CD8-positive, alpha-beta T cell (primary cell): ENCODE measurements at regions of chr4 and their contacts with region 1.

Region 1: DNA sequence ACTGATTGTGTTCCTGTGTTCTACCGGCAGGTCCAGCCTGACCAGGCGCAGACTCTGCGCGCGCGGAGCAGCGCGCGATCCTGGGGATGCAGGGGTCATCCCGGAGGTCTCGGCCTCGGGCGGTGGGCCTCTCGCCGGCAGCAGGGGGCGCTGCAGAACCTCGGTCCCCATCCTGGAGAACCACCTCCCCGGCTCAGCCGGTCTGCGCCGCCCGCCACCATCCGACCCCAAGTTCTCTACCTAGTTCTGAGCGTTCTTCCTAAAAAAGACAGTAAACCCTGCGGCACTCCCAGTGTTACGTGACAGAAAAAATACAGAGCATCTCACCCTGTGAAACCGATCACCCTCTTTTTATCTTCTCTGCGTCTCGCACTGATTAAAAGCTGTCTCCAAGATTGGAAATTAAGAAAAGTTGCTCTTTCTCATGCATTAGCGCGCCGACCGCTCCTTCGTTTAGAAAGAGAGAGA is 1.6 kb downstream of the TRPC3 start:
- DNase-seq: peak; percentile 74 to 91 (median 85)
- ATAC-seq: peak; percentile 84
- H3K4me3 ChIP-seq: peak overlapping the region; percentile 65 to 71
- H3K4me3 Mint-ChIP-seq: peak overlapping the region; percentile 88
- H3K27ac ChIP-seq: peak overlapping the region in 1 of 2 experiments; percentile 34
- H3K27ac Mint-ChIP-seq: no peak overlapping the region
- H3K4me1 ChIP-seq: peaks cover 3% of the 10 kb centered on the region
- H3K4me1 Mint-ChIP-seq: peaks cover 8% of the 10 kb centered on the region
- H3K27me3 ChIP-seq: peaks cover 7 to 8% of the 10 kb centered on the region in 2 experiments
- H3K27me3 Mint-ChIP-seq: peaks cover 51% of the 10 kb centered on the region
- CTCF ChIP-seq: peak; percentile 86

Region 2: DNA sequence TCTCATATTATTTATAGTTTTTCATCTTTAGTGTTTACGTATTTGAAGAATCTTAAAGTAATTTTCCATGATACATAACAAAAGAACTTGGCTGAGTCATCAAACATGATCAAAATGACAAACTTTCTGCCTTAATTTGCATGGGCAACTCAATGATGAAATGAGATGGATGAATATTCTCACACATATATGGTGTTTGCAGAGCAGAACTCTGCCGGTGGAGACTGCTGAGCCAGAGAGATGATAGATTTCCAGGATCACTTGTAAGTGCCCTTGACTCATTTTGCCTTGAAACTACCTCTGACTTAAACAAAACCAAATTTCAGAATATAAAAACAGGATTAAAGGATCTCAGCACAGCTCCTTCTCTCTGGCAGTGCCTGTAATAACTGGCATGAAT is 36.6 kb before region 1 on chr4:
- CTCF ChIA-PET with region 1: no interaction called
- POLR2A ChIA-PET with region 1: no interaction called
- intact Hi-C with region 1: no loop called
- DNase-seq: no peak
- ATAC-seq: no peak
- H3K4me3 ChIP-seq: no peak overlapping the region
- H3K4me3 Mint-ChIP-seq: no peak overlapping the region
- H3K27ac ChIP-seq: no peak overlapping the region
- H3K27ac Mint-ChIP-seq: no peak overlapping the region
- H3K4me1 ChIP-seq: no peaks in the 10 kb centered on the region
- H3K4me1 Mint-ChIP-seq: peaks cover 5% of the 10 kb centered on the region
- H3K27me3 ChIP-seq: no peaks in the 10 kb centered on the region
- H3K27me3 Mint-ChIP-seq: peaks cover 4% of the 10 kb centered on the region
- CTCF ChIP-seq: no peak

Region 3: DNA sequence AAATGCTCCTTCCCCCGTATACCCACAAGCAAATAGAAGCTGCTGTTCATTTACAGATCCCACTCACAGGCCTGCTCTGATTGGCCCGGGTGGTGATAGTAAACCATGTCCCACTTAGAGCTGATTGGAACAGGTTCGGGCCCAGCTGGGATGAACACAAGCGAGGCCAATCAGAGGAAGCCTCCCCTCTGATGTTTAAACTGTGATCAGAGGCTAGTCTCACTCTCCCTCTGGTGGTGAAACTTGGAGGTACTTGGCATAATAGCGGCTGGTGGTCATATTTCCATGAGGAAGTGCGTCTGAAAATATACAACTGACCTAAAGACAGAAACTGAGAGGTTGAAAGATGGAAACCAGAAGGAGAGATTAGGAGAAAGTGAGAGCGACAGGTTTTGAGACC is 53.1 kb after region 1 on chr4:
- CTCF ChIA-PET with region 1: interaction called, 3 read pairs
- POLR2A ChIA-PET with region 1: no interaction called
- intact Hi-C with region 1: loop called in 1 of 2 experiments (anchors 2 kb)
- DNase-seq: peak in 5 of 9 experiments; percentile 2 to 80 (median 21)
- ATAC-seq: peak; percentile 34
- H3K4me3 ChIP-seq: no peak overlapping the region
- H3K4me3 Mint-ChIP-seq: no peak overlapping the region
- H3K27ac ChIP-seq: no peak overlapping the region
- H3K27ac Mint-ChIP-seq: no peak overlapping the region
- H3K4me1 ChIP-seq: no peaks in the 10 kb centered on the region
- H3K4me1 Mint-ChIP-seq: no peaks in the 10 kb centered on the region
- H3K27me3 ChIP-seq: no peaks in the 10 kb centered on the region
- H3K27me3 Mint-ChIP-seq: peaks cover 16% of the 10 kb centered on the region
- CTCF ChIP-seq: no peak

Region 4: GRCh38 chr4:122218762-122219161 is 268.5 kb after region 1 on chr4:
- CTCF ChIA-PET with region 1: no interaction called
- POLR2A ChIA-PET with region 1: no interaction called
- intact Hi-C with region 1: loop called in 1 of 2 experiments (anchors 2 kb)
- DNase-seq: peak in 2 of 9 experiments; percentile 4 to 27
- ATAC-seq: peak; percentile 45
- H3K4me3 ChIP-seq: no peak overlapping the region
- H3K4me3 Mint-ChIP-seq: no peak overlapping the region
- H3K27ac ChIP-seq: no peak overlapping the region
- H3K27ac Mint-ChIP-seq: no peak overlapping the region
- H3K4me1 ChIP-seq: no peaks in the 10 kb centered on the region
- H3K4me1 Mint-ChIP-seq: peaks cover 14% of the 10 kb centered on the region
- H3K27me3 ChIP-seq: no peaks in the 10 kb centered on the region
- H3K27me3 Mint-ChIP-seq: no peaks in the 10 kb centered on the region
- CTCF ChIP-seq: peak; percentile 23

Region 5: DNA sequence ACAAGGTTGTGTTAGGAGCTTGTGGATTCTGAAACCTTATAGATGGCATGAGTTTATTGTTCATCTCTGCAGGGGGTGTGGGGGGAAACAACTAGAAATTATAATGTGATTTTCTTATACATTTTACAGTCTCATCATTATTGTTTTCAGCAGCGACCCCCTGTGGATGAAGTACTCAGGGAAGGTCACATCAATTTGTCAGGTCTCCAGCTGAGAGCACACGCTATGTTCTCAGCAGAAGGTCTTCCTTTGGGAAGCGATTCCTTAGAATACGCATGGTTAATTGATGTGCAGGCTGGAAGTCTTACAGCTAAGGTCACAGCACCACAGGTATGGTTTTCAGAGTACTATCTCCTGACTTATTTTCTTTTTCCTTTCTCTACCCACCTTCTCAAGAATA is 274.1 kb after region 1 on chr4:
- CTCF ChIA-PET with region 1: no interaction called
- POLR2A ChIA-PET with region 1: no interaction called
- intact Hi-C with region 1: loop called (anchors 2 kb)
- DNase-seq: peak in 4 of 9 experiments; percentile 7 to 35 (median 12)
- ATAC-seq: no peak
- H3K4me3 ChIP-seq: no peak overlapping the region
- H3K4me3 Mint-ChIP-seq: no peak overlapping the region
- H3K27ac ChIP-seq: no peak overlapping the region
- H3K27ac Mint-ChIP-seq: no peak overlapping the region
- H3K4me1 ChIP-seq: no peaks in the 10 kb centered on the region
- H3K4me1 Mint-ChIP-seq: peaks cover 8% of the 10 kb centered on the region
- H3K27me3 ChIP-seq: no peaks in the 10 kb centered on the region
- H3K27me3 Mint-ChIP-seq: no peaks in the 10 kb centered on the region
- CTCF ChIP-seq: no peak